Activated CD8-positive, alpha-beta T cell treated with anti-CD3 and anti-CD28 coated beads for 36 hours (primary cell): ENCODE measurements at regions of chr4 and their contacts with region 1.

Region 1: DNA sequence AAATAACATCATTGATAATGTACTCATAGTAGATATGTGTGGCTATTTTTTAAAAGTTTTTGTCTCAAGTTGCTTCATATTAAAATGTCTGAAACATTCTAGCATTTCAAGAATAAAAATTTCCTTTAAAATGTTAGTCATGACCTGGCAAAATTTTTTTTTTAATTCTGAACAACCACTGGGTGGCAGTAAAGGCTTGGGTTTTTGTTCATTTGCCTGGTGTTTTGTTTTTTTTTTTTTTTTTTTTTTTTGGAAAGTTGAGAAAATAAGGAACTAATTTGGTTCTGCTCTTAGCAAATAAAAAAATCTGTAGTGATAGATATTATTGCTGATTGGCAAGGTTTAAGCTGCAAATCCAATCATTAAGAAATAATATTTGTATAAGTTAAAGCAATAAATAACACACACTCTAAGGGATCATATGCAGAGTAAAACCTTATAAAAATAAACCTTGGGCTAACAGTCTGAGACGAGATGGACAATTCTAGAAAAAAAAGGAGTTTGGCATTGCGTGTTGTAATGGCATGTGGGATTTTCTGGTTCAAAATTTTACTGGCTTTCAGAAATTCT is 81.4 kb downstream of the CEP44 start:
- DNase-seq: no peak
- ATAC-seq: no peak
- H3K4me3 Mint-ChIP-seq: no peak overlapping the region
- H3K27ac Mint-ChIP-seq: no peak overlapping the region
- H3K4me1 Mint-ChIP-seq: no peaks in the 10 kb centered on the region
- H3K27me3 Mint-ChIP-seq: peaks cover 6% of the 10 kb centered on the region
- CTCF ChIP-seq: peak; percentile 64

Region 2: GRCh38 chr4:173735049-173735448 is 630.1 kb before region 1 on chr4:
- CTCF ChIA-PET with region 1: no interaction called
- POLR2A ChIA-PET with region 1: no interaction called
- intact Hi-C with region 1: no loop called
- DNase-seq: no peak
- ATAC-seq: no peak
- H3K4me3 Mint-ChIP-seq: no peak overlapping the region
- H3K27ac Mint-ChIP-seq: no peak overlapping the region
- H3K4me1 Mint-ChIP-seq: no peaks in the 10 kb centered on the region
- H3K27me3 Mint-ChIP-seq: no peaks in the 10 kb centered on the region
- CTCF ChIP-seq: no peak

Region 3: DNA sequence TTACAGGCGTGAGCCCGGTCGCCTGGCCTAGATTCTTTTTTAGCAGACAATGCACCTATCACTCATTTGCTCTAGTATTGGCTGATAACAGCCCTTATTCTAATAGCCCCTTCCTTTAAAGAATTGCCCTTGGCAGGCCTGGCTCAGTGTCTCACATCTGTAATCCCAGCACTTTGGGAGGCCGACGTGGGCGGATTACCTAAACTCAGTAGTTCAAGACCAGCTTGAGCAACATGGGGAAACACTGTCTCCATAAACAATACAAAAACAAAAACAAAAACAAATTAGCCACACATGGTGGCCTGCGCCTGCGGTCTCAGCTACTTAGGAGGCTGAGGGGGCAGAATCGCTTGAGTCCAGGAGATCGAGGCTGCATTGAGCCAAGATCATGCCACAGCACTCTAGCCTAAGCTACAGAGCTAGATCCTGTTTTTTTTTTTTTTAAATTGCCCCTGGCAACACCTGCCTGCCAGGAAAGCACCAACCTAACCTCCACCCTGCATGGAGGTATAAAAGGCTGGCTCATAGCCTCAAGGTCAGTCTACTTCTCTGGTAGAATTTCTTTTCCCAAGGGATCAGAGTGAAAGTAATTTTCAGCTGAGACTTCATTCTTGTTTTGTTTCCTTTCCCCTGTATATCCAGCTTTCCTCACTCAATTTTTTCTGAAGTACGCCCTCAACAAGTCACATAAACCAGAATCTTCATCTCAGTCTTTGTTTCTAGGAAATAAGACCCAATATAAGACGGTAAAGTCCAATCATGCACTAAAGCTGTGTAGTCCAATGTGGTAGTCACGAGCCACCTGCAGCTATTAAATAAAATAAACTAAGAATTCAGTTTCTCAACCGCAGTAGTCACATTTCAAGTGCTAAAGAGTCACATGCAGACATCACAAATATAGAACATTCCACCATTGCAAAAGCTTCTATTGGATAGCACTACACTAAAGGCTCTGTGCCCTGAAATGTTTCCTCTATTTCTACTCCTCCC is 43.8 kb after region 1 on chr4:
- CTCF ChIA-PET with region 1: no interaction called
- POLR2A ChIA-PET with region 1: no interaction called
- intact Hi-C with region 1: no loop called
- DNase-seq: no peak
- ATAC-seq: no peak
- H3K4me3 Mint-ChIP-seq: no peak overlapping the region
- H3K27ac Mint-ChIP-seq: no peak overlapping the region
- H3K4me1 Mint-ChIP-seq: peaks cover 3% of the 10 kb centered on the region
- H3K27me3 Mint-ChIP-seq: no peaks in the 10 kb centered on the region
- CTCF ChIP-seq: no peak

Region 4: GRCh38 chr4:174631901-174632758 is 267.0 kb after region 1 on chr4:
- CTCF ChIA-PET with region 1: interaction called, 6 read pairs
- POLR2A ChIA-PET with region 1: no interaction called
- intact Hi-C with region 1: loop called (anchors 2 kb)
- DNase-seq: peak; percentile 4
- ATAC-seq: no peak
- H3K4me3 Mint-ChIP-seq: no peak overlapping the region
- H3K27ac Mint-ChIP-seq: no peak overlapping the region
- H3K4me1 Mint-ChIP-seq: no peaks in the 10 kb centered on the region
- H3K27me3 Mint-ChIP-seq: peaks cover 1% of the 10 kb centered on the region
- CTCF ChIP-seq: peak; percentile 43

Region 5: DNA sequence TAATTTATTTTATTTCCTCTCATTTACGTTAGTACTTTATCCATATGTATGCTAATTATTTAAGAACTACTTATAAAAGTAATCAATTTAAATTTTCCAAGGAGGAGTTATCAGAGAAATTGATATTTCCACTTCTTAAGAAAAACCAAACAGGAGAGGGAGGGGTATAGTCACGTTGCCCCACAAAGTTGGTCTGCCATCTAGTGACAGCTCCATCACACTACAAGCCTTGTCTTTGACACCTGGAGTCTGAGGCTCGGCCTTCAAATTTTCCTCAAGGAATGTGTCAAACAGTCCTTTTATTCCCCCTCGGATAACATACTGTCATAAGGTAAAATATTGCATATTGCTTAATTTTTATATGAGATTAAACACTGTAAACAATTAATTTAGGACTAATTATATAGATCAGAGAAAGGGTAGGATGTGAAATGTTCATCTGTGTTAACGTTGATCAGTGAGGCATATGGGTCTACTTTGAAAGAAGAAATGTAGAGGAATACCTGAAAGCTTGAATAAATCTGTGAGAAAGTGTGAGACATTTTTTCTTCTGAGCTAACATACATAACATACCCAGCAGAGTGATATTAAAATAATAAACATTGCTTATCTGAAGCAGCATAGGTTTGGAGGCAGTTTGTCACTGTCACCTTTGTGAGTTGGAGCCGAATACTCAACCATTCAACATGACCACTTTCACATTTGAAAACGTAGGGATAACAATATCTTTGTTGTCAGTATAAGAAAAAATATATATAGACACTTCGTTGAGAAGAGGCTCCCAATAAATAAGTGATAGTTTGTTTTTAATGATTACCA is 349.5 kb after region 1 on chr4:
- CTCF ChIA-PET with region 1: interaction called, 3 read pairs
- POLR2A ChIA-PET with region 1: no interaction called
- intact Hi-C with region 1: loop called (anchors 5 kb)
- DNase-seq: peak; percentile 24
- ATAC-seq: peak; percentile 67
- H3K4me3 Mint-ChIP-seq: no peak overlapping the region
- H3K27ac Mint-ChIP-seq: no peak overlapping the region
- H3K4me1 Mint-ChIP-seq: no peaks in the 10 kb centered on the region
- H3K27me3 Mint-ChIP-seq: peaks cover 7% of the 10 kb centered on the region
- CTCF ChIP-seq: peak; percentile 74